H1 (cell line): ENCODE measurements at regions of chr17 and their contacts with region 1.

Region 1: GRCh38 chr17:80426681-80427326 is 11.8 kb downstream of the ENDOV start:
- DNase-seq: peak; percentile 56 to 97
- H3K4me3 ChIP-seq: no peak overlapping the region
- H3K27ac ChIP-seq: no peak overlapping the region
- H3K4me1 ChIP-seq: peaks cover 0 to 8% (median 2%) of the 10 kb centered on the region in 4 experiments; a peak in 3 of 7 replicates
- H3K27me3 ChIP-seq: no peaks in the 10 kb centered on the region; a peak in 1 of 7 replicates
- CTCF ChIP-seq: peak; percentile 97 to 98 (median 98)
- EP300 ChIP-seq: no peak
- POLR2A ChIP-seq: no peak
- RAD21 ChIP-seq: peak; percentile 99

Region 2: DNA sequence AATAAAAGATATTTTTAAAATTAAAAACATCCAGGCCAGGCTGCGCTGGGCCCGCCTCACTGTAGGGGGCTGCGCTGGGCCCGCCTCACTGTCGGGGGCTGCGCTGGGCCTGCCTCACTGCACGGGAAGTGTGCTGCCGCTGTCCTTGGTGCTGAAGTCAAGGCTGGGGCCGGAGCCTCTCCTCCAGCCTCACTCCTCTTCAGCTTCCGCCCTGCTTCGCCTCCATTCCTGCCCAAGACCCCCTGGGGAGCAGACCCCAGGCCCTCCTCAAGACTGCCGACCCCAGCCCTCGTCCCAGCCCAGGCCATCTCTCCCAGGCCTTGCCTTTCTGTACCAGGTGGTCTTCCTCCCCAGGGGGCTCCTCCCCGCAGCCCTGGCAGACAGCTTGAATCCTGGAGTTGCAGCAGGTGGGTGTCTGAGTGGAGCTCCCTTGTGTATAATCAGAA is 14.4 kb after region 1 on chr17:
- CTCF ChIA-PET with region 1: interaction called, 21 read pairs
- POLR2A ChIA-PET with region 1: interaction called, 3 read pairs
- DNase-seq: peak in 1 of 2 experiments; percentile 95
- H3K4me3 ChIP-seq: no peak overlapping the region
- H3K27ac ChIP-seq: no peak overlapping the region
- H3K4me1 ChIP-seq: peaks cover 3 to 11% (median 8%) of the 10 kb centered on the region in 4 experiments; a peak in 6 of 7 replicates
- H3K27me3 ChIP-seq: peaks cover 0 to 7% (median 0%) of the 10 kb centered on the region in 4 experiments; a peak in 3 of 7 replicates
- CTCF ChIP-seq: no peak
- EP300 ChIP-seq: no peak
- POLR2A ChIP-seq: no peak
- RAD21 ChIP-seq: peak in 1 of 2 experiments; percentile 20; a peak in 1 of 4 replicates

Region 3: DNA sequence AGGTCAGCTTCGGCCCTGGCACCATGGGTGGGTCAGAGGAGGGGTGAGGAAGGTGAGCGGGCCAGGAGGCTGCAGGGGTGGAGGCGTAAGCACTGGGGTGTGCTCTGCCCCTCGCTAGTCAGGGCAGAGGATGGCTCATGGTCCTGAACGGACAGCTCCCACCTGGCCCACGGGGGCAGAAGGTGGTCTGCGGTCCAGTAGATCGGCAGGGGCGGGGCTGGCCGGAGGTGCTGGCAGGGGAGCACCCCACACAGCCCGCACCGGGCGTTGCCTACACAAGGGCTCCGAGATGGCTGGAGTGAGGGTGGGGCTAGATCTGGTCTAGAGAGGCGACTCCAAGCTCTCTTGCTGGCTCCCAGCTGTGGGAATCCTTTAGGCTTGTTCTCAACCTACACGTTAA is 41.4 kb after region 1 on chr17:
- CTCF ChIA-PET with region 1: interaction called, 22 read pairs
- POLR2A ChIA-PET with region 1: interaction called, 3 read pairs
- DNase-seq: peak in 1 of 2 experiments; percentile 72
- H3K4me3 ChIP-seq: no peak overlapping the region
- H3K27ac ChIP-seq: no peak overlapping the region
- H3K4me1 ChIP-seq: no peaks in the 10 kb centered on the region; a peak in 1 of 7 replicates
- H3K27me3 ChIP-seq: peaks cover 4 to 30% (median 24%) of the 10 kb centered on the region in 4 experiments
- CTCF ChIP-seq: no peak
- EP300 ChIP-seq: no peak
- POLR2A ChIP-seq: no peak
- RAD21 ChIP-seq: no peak

Region 4: GRCh38 chr17:80474231-80474960 is 47.6 kb after region 1 on chr17:
- CTCF ChIA-PET with region 1: interaction called, 22 read pairs
- POLR2A ChIA-PET with region 1: interaction called, 3 read pairs
- DNase-seq: no peak
- H3K4me3 ChIP-seq: peak overlapping the region in 1 of 4 experiments; percentile 60; a peak in 4 of 8 replicates
- H3K27ac ChIP-seq: no peak overlapping the region
- H3K4me1 ChIP-seq: peaks cover 0 to 26% (median 11%) of the 10 kb centered on the region in 4 experiments; a peak in 5 of 7 replicates
- H3K27me3 ChIP-seq: peaks cover 64 to 86% (median 80%) of the 10 kb centered on the region in 4 experiments
- CTCF ChIP-seq: peak in 1 of 3 experiments; percentile 18; a peak in 1 of 4 replicates
- EP300 ChIP-seq: no peak
- POLR2A ChIP-seq: no peak
- RAD21 ChIP-seq: 0 out of 4 replicates have a peak, but pooled peaks of 1 of the 2 experiments have one; percentile 12

Region 5: DNA sequence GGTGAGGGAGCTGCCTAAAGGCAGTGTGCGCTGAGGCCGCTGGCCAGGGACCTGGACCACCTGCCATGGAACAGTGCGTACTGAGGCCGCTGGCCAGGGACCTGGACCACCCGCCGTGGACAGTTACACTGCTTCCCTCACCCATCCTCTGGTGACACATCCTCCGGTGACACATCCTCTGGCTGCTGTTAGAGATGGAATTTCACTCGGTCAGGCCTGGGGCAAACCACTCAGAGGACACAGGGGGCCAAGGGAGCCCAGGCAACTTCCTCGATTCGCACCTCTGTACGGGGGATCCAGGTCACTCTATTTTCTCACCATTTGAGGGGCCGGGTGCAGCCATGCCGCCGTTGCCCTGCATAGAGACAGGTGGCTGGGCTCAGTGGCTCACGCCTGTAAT is 85.4 kb after region 1 on chr17:
- CTCF ChIA-PET with region 1: interaction called, 12 read pairs
- POLR2A ChIA-PET with region 1: no interaction called
- DNase-seq: no peak
- H3K4me3 ChIP-seq: no peak overlapping the region
- H3K27ac ChIP-seq: no peak overlapping the region
- H3K4me1 ChIP-seq: peaks cover 0 to 2% (median 1%) of the 10 kb centered on the region in 4 experiments; a peak in 3 of 7 replicates
- H3K27me3 ChIP-seq: peaks cover 0 to 8% (median 3%) of the 10 kb centered on the region in 4 experiments; a peak in 4 of 7 replicates
- CTCF ChIP-seq: no peak
- EP300 ChIP-seq: no peak
- POLR2A ChIP-seq: no peak
- RAD21 ChIP-seq: no peak

Region 6: DNA sequence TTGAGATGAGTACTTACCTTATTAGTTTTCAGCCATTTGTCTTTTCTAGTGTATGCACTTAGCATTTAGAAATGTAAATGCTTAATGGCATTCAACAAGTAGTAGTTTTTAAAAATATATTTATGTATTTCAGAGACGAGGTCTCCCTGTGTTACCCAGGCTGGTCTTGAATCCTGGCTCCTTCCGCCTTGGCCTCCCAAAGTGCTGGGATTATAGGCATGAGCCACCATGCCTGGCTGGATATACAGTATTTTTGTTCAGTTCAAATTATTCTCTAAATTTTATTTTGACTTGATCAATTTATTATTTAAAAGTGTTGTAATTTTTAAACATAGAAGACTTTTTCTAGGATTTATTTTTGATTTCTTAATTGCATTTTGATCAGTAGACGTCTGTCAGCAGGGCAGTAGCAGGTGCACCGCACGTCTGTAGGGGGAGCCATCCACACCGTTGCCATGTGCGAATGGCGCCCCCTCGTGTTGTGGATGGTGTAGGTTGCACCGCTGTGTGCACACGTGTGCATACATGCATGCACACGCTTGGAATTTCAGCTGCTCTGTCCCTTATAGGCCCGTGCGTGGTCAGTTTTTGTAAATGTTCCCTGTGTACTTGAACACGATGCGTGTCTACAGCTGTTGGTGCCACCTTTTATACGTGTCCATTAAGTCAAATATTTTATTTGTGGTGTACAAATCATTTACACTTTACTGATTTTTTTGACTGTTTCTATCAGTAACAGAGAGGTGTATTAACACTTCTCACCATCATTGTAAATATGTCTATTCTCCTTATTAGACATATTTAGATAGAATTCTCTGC is 148.5 kb after region 1 on chr17:
- CTCF ChIA-PET with region 1: interaction called, 13 read pairs
- POLR2A ChIA-PET with region 1: no interaction called
- DNase-seq: peak; percentile 58 to 95
- H3K4me3 ChIP-seq: no peak overlapping the region
- H3K27ac ChIP-seq: no peak overlapping the region
- H3K4me1 ChIP-seq: no peaks in the 10 kb centered on the region; a peak in 1 of 7 replicates
- H3K27me3 ChIP-seq: no peaks in the 10 kb centered on the region
- CTCF ChIP-seq: peak; percentile 100
- EP300 ChIP-seq: no peak
- POLR2A ChIP-seq: no peak
- RAD21 ChIP-seq: peak; percentile 91